ENCODE measurements at regions of chr6 and their contacts with region 1.

Region 1: GRCh38 chr6:90584636-90585255 is 2.1 kb downstream of the MAP3K7 start:
- DNase-seq: no peak
- H3K4me3 ChIP-seq: peak overlapping the region; percentile 28
- CTCF ChIP-seq: no peak

Region 2: GRCh38 chr6:89853068-89853467 is 731.7 kb before region 1 on chr6:
- CTCF ChIA-PET with region 1: no interaction called
- POLR2A ChIA-PET with region 1: no interaction called
- DNase-seq: peak; percentile 26
- H3K4me3 ChIP-seq: no peak overlapping the region
- CTCF ChIP-seq: no peak

Region 3: GRCh38 chr6:90574610-90575009 is 10.1 kb before region 1 on chr6:
- CTCF ChIA-PET with region 1: interaction called, 11 read pairs
- POLR2A ChIA-PET with region 1: no interaction called
- DNase-seq: peak; percentile 24
- H3K4me3 ChIP-seq: no peak overlapping the region
- CTCF ChIP-seq: no peak

Region 4: GRCh38 chr6:90596967-90597539 is 12.3 kb after region 1 on chr6:
- CTCF ChIA-PET with region 1: no interaction called
- POLR2A ChIA-PET with region 1: no interaction called
- DNase-seq: no peak
- H3K4me3 ChIP-seq: no peak overlapping the region
- CTCF ChIP-seq: no peak